Transverse colon (tissue), 4 donors: ENCODE measurements at regions of chr17 and their contacts with region 1.

Region 1: GRCh38 chr17:59106463-59107305 is at the start of gene TRIM37:
- DNase-seq: peak; percentile 99
- H3K4me3 ChIP-seq: peak within 1 kb of the TSS; percentile 66 to 95 (median 83)
- H3K27ac ChIP-seq: peak within 1 kb of the TSS; percentile 94 to 98 (median 97)
- H3K4me1 ChIP-seq: peaks cover 0 to 31% (median 11%) of the 10 kb centered on the region in 4 donors
- H3K27me3 ChIP-seq: no peaks in the 10 kb centered on the region
- CTCF ChIP-seq: peak in 3 of 5 experiments; percentile 7 to 25 (median 14)
- EP300 ChIP-seq: no peak
- POLR2A ChIP-seq: peak; percentile 83
- total RNA-seq, gene TRIM37: 2.2 to 18.3 (median 14.7) TPM

Region 2: DNA sequence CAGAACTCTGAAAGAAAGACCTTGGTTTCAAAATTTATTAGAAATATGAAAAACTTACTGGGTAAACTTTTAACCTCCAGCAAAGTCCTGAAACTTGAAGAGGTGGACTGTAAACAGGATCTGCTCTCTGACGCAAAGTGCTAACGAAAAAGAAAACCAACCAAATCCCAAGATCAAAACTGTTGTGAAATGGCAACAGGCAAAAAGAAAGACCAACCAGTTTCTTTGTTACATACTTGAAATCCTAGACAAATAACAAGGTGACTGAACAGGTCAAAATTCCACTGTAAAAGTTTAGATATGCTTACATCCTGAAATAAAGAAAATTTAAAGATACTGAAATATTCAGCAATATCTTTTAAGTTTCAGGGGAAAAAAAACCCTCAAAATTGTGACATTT is 44.2 kb before region 1 on chr17:
- in situ Hi-C with region 1: no loop called
- intact Hi-C with region 1: no loop called
- DNase-seq: no peak
- H3K4me3 ChIP-seq: no peak overlapping the region
- H3K27ac ChIP-seq: no peak overlapping the region
- H3K4me1 ChIP-seq: no peaks in the 10 kb centered on the region
- H3K27me3 ChIP-seq: no peaks in the 10 kb centered on the region
- CTCF ChIP-seq: no peak
- EP300 ChIP-seq: no peak
- POLR2A ChIP-seq: no peak

Region 3: GRCh38 chr17:59155439-59156182 is 48.9 kb after region 1 on chr17 and contains the start of gene PRR11:
- in situ Hi-C with region 1: no loop called
- intact Hi-C with region 1: loop called (anchors 10 kb)
- DNase-seq: peak; percentile 95
- H3K4me3 ChIP-seq: peak within 1 kb of the TSS; percentile 55 to 85 (median 71)
- H3K27ac ChIP-seq: peak within 1 kb of the TSS; percentile 74 to 93 (median 88)
- H3K4me1 ChIP-seq: peaks cover 14 to 36% (median 18%) of the 10 kb centered on the region in 4 donors
- H3K27me3 ChIP-seq: no peaks in the 10 kb centered on the region
- CTCF ChIP-seq: no peak
- EP300 ChIP-seq: no peak
- POLR2A ChIP-seq: no peak
- total RNA-seq, gene PRR11: 0.68 to 115 (median 15.7) TPM in 3 of 4 donors, not detected in the other

Region 4: GRCh38 chr17:59534598-59534997 is 427.9 kb after region 1 on chr17:
- in situ Hi-C with region 1: no loop called
- intact Hi-C with region 1: no loop called
- DNase-seq: no peak
- H3K4me3 ChIP-seq: no peak overlapping the region
- H3K27ac ChIP-seq: no peak overlapping the region
- H3K4me1 ChIP-seq: no peaks in the 10 kb centered on the region
- H3K27me3 ChIP-seq: no peaks in the 10 kb centered on the region
- CTCF ChIP-seq: no peak
- EP300 ChIP-seq: no peak
- POLR2A ChIP-seq: no peak